ENCODE measurements at regions of chr1 and their contacts with region 1.

Region 1: DNA sequence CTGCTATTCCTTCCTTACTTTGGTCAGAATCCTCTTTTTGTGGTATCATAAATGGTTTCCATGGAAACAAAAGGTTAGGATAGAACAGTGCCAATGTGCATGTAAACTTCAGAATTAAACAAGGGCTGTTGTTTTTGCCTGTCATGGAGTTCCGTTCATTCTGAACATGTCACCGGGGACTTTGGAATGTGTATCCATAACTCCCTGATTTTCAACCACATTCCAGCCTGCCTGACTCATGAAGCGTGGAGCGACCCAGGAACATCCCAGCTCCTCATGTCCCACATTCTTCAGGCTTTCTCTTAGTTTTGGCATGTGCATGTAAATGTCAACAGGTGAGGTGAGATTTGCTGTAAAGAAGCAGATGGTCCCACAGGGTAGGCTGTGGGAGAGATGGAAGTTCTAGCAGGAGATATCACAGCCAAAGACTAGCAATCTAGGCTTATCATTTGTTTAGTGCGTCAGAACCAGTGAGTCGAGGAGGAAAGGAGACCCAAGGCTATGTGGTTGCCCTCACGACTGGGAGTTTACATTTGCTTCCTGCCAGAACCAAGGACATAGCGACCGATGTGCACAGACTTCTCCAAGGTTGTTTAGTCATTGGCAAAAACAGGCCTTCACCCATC is 23.0 kb upstream of the DNAJC11 start:
- DNase-seq: no peak
- ATAC-seq: no peak
- H3K4me3 Mint-ChIP-seq: no peak overlapping the region
- H3K27ac Mint-ChIP-seq: no peak overlapping the region
- H3K4me1 Mint-ChIP-seq: no peaks in the 10 kb centered on the region
- H3K27me3 Mint-ChIP-seq: peaks cover 5% of the 10 kb centered on the region

Region 2: GRCh38 chr1:6770751-6771440 is 46.3 kb after region 1 on chr1:
- CTCF ChIA-PET with region 1: no interaction called
- DNase-seq: no peak
- ATAC-seq: no peak
- H3K4me3 Mint-ChIP-seq: no peak overlapping the region
- H3K27ac Mint-ChIP-seq: no peak overlapping the region
- H3K4me1 Mint-ChIP-seq: peaks cover 2% of the 10 kb centered on the region
- H3K27me3 Mint-ChIP-seq: peaks cover 38% of the 10 kb centered on the region

Region 3: GRCh38 chr1:7070389-7071029 is 345.9 kb after region 1 on chr1:
- CTCF ChIA-PET with region 1: interaction called, 12 read pairs
- DNase-seq: peak; percentile 64
- ATAC-seq: peak; percentile 67
- H3K4me3 Mint-ChIP-seq: no peak overlapping the region
- H3K27ac Mint-ChIP-seq: no peak overlapping the region
- H3K4me1 Mint-ChIP-seq: peaks cover 2% of the 10 kb centered on the region
- H3K27me3 Mint-ChIP-seq: peaks cover 10% of the 10 kb centered on the region